IMR-90 (cell line): ENCODE measurements at regions of chr3 and their contacts with region 1.

Region 1: DNA sequence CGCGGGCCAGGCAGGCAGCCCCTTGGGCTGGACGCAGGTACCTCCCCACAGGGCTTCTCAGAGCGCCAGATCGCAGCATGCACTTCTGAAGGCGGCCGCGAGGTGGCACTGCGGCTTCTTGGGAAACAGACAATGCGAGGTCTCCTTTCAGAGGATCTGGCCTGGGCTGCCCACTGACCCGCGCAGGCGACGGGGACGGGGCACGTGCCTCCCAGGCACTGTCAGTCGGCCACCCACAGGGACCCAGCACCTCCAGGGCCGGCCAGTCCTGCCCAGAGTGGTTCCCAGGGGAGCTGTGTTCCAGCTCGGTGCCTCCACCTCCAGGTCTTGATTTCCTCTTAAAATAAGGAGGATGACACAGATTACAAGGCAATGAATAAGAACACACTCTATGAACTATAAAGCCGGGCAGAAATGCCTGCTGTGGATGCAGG is 24.4 kb upstream of the TXNRD3 start:
- DNase-seq: peak; percentile 62
- ATAC-seq: peak; percentile 99
- H3K4me3 ChIP-seq: no peak overlapping the region
- H3K27ac ChIP-seq: no peak overlapping the region
- H3K4me1 ChIP-seq: no peaks in the 10 kb centered on the region
- H3K27me3 ChIP-seq: peaks cover 38% of the 10 kb centered on the region
- CTCF ChIP-seq: peak; percentile 85
- POLR2A ChIP-seq: no peak
- RAD21 ChIP-seq: peak; percentile 84

Region 2: GRCh38 chr3:126522363-126522788 is 157.0 kb before region 1 on chr3:
- CTCF ChIA-PET with region 1: no interaction called
- POLR2A ChIA-PET with region 1: no interaction called
- dilution Hi-C with region 1: no loop called
- in situ Hi-C with region 1: no loop called
- intact Hi-C with region 1: loop called (anchors 1 kb)
- DNase-seq: peak; percentile 33
- ATAC-seq: peak; percentile 72
- H3K4me3 ChIP-seq: no peak overlapping the region
- H3K27ac ChIP-seq: no peak overlapping the region
- H3K4me1 ChIP-seq: no peaks in the 10 kb centered on the region; the same call in 1 of the 2 replicates
- H3K27me3 ChIP-seq: peaks cover 45% of the 10 kb centered on the region
- CTCF ChIP-seq: peak; percentile 78
- POLR2A ChIP-seq: no peak
- RAD21 ChIP-seq: peak; percentile 78

Region 3: GRCh38 chr3:126665221-126665936 is 14.0 kb before region 1 on chr3:
- CTCF ChIA-PET with region 1: no interaction called
- POLR2A ChIA-PET with region 1: no interaction called
- dilution Hi-C with region 1: no loop called
- in situ Hi-C with region 1: no loop called
- intact Hi-C with region 1: no loop called
- DNase-seq: no peak
- ATAC-seq: no peak
- H3K4me3 ChIP-seq: no peak overlapping the region
- H3K27ac ChIP-seq: no peak overlapping the region
- H3K4me1 ChIP-seq: peaks cover 2% of the 10 kb centered on the region; the same call in 1 of the 2 replicates
- H3K27me3 ChIP-seq: peaks cover 68% of the 10 kb centered on the region
- CTCF ChIP-seq: no peak
- POLR2A ChIP-seq: no peak
- RAD21 ChIP-seq: no peak

Region 4: GRCh38 chr3:126982471-126983175 is 303.3 kb after region 1 on chr3 and contains the start of gene PLXNA1:
- CTCF ChIA-PET with region 1: interaction called, 4 read pairs
- POLR2A ChIA-PET with region 1: no interaction called
- dilution Hi-C with region 1: no loop called
- in situ Hi-C with region 1: no loop called
- intact Hi-C with region 1: loop called (anchors 1 kb)
- DNase-seq: peak; percentile 66
- ATAC-seq: peak; percentile 79
- H3K4me3 ChIP-seq: peak within 1 kb of the TSS; percentile 67
- H3K27ac ChIP-seq: peak within 1 kb of the TSS; percentile 72
- H3K4me1 ChIP-seq: peaks cover 14% of the 10 kb centered on the region; the same call in 1 of the 2 replicates
- H3K27me3 ChIP-seq: no peaks in the 10 kb centered on the region; the same call in 1 of the 2 replicates
- CTCF ChIP-seq: peak; percentile 91
- POLR2A ChIP-seq: peak; percentile 55; the same call in 1 of the 2 replicates
- RAD21 ChIP-seq: peak; percentile 48
- total RNA-seq, gene PLXNA1: 13.6 and 14.4 TPM in 2 replicates

Region 5: GRCh38 chr3:127002195-127003174 is 323.1 kb after region 1 on chr3:
- CTCF ChIA-PET with region 1: no interaction called
- POLR2A ChIA-PET with region 1: no interaction called
- dilution Hi-C with region 1: no loop called
- in situ Hi-C with region 1: no loop called
- intact Hi-C with region 1: loop called (anchors 1 kb)
- DNase-seq: peak; percentile 89
- ATAC-seq: peak; percentile 92
- H3K4me3 ChIP-seq: no peak overlapping the region
- H3K27ac ChIP-seq: peak overlapping the region; percentile 99
- H3K4me1 ChIP-seq: peaks cover 29% of the 10 kb centered on the region
- H3K27me3 ChIP-seq: no peaks in the 10 kb centered on the region
- CTCF ChIP-seq: peak; percentile 69
- POLR2A ChIP-seq: 0 out of 2 replicates have a peak, but pooled peaks have one; percentile 49
- RAD21 ChIP-seq: peak; percentile 70

Region 6: DNA sequence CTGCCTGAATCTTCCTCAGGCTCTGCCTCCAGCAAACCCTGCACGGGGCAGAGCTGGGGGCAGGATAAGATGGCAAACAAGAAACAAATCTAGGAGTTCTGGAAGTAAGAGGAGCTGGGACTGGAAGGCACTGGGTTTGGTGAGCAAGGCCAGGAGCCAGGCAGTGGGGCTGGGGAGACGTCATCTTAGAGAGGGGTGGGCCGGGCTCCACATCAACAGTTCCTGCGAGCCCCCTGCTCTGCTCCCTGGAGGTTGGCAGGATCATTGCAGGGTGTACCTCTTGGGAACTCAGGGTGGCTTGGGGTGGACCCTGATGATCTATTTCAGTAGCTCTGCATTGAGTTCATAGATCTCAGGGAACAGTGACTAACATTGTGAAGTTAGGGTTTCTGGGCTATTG is 426.3 kb after region 1 on chr3:
- CTCF ChIA-PET with region 1: no interaction called
- POLR2A ChIA-PET with region 1: no interaction called
- dilution Hi-C with region 1: no loop called
- in situ Hi-C with region 1: no loop called
- intact Hi-C with region 1: no loop called
- DNase-seq: no peak
- ATAC-seq: no peak
- H3K4me3 ChIP-seq: no peak overlapping the region
- H3K27ac ChIP-seq: no peak overlapping the region
- H3K4me1 ChIP-seq: no peaks in the 10 kb centered on the region
- H3K27me3 ChIP-seq: peaks cover 19% of the 10 kb centered on the region; the same call in 1 of the 2 replicates
- CTCF ChIP-seq: no peak
- POLR2A ChIP-seq: no peak
- RAD21 ChIP-seq: no peak

Region 7: GRCh38 chr3:127177231-127177630 is 497.9 kb after region 1 on chr3:
- CTCF ChIA-PET with region 1: no interaction called
- POLR2A ChIA-PET with region 1: no interaction called
- dilution Hi-C with region 1: no loop called
- in situ Hi-C with region 1: no loop called
- intact Hi-C with region 1: loop called (anchors 2 kb)
- DNase-seq: no peak
- ATAC-seq: no peak
- H3K4me3 ChIP-seq: no peak overlapping the region
- H3K27ac ChIP-seq: no peak overlapping the region
- H3K4me1 ChIP-seq: peaks cover 3% of the 10 kb centered on the region; the same call in 1 of the 2 replicates
- H3K27me3 ChIP-seq: peaks cover 8% of the 10 kb centered on the region
- CTCF ChIP-seq: 0 out of 2 replicates have a peak, but pooled peaks have one; percentile 6
- POLR2A ChIP-seq: no peak
- RAD21 ChIP-seq: no peak

Region 8: GRCh38 chr3:127455541-127456450 is 776.5 kb after region 1 on chr3:
- CTCF ChIA-PET with region 1: interaction called, 4 read pairs
- POLR2A ChIA-PET with region 1: no interaction called
- dilution Hi-C with region 1: no loop called
- in situ Hi-C with region 1: loop called (anchors 5 kb)
- intact Hi-C with region 1: loop called (anchors 1 kb)
- DNase-seq: peak; percentile 29
- ATAC-seq: peak; percentile 98
- H3K4me3 ChIP-seq: no peak overlapping the region
- H3K27ac ChIP-seq: no peak overlapping the region
- H3K4me1 ChIP-seq: no peaks in the 10 kb centered on the region
- H3K27me3 ChIP-seq: peaks cover 30% of the 10 kb centered on the region
- CTCF ChIP-seq: peak; percentile 97
- POLR2A ChIP-seq: no peak
- RAD21 ChIP-seq: peak; percentile 87

Region 9: DNA sequence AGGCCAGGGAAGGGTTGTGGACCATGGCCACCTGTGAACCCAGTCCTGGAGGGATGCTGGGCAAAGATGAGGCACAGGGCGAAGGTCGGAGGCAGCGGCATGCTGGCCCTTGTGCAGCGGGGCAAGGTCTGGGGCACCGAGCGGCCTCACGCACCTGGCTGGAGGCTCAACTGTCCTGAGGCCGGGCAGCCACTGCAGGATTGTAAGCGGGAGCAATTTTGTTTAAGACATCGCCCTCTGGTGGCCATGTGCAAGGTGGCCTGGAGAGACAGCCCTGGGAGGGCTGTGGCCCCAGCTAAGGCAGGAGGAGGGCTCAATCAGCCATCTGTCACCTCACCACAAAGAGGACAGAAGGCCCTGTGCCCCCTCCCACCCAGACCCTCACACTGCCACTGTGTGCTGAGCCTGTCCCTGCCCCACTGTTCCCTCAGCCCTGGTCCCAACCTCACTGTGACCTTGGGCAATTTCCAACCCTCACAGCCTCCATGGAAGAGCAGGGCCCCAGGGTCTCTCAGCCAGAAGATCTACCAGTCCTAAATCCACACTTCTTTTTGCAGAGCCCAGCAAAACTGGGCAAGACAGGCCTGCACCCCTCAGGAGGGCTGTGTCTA is 865.0 kb after region 1 on chr3:
- CTCF ChIA-PET with region 1: no interaction called
- POLR2A ChIA-PET with region 1: no interaction called
- dilution Hi-C with region 1: no loop called
- in situ Hi-C with region 1: loop called (anchors 10 kb)
- intact Hi-C with region 1: loop called (anchors 2 kb)
- DNase-seq: peak; percentile 60
- ATAC-seq: peak; percentile 70
- H3K4me3 ChIP-seq: no peak overlapping the region
- H3K27ac ChIP-seq: no peak overlapping the region
- H3K4me1 ChIP-seq: no peaks in the 10 kb centered on the region; the same call in 1 of the 2 replicates
- H3K27me3 ChIP-seq: peaks cover 25% of the 10 kb centered on the region; the same call in 1 of the 2 replicates
- CTCF ChIP-seq: peak; percentile 69
- POLR2A ChIP-seq: no peak
- RAD21 ChIP-seq: peak; percentile 62